ENCODE measurements at regions of chr4 and their contacts with region 1.

Region 1: DNA sequence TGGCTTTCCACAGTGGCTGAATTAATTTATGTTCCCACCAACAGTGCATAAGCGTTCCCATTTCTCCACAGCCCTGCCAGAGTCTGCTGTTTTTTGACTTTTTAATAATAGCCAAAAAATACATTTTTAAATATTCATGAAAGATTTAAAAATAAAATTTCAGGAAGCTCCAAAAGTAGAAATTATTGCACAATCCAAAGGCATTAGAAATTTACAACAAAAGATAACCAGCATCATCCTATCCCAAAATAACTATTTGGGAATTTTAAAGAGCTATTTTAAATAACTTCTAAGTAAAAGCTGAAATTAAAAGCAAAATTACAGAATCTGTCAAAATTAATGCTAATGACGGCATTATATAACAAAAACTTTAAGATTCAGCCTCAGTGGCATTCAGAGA is 131.5 kb downstream of the QDPR start:
- DNase-seq: no peak
- H3K4me3 ChIP-seq: no peak overlapping the region
- H3K27ac ChIP-seq: no peak overlapping the region
- H3K4me1 ChIP-seq: no peaks in the 10 kb centered on the region
- H3K27me3 ChIP-seq: no peaks in the 10 kb centered on the region
- CTCF ChIP-seq: no peak
- EP300 ChIP-seq: no peak
- POLR2A ChIP-seq: no peak
- RAD21 ChIP-seq: no peak

Region 2: GRCh38 chr4:17397611-17398010 is 17.3 kb after region 1 on chr4:
- CTCF ChIA-PET with region 1: interaction called, 12 read pairs
- POLR2A ChIA-PET with region 1: no interaction called
- DNase-seq: no peak
- H3K4me3 ChIP-seq: no peak overlapping the region
- H3K27ac ChIP-seq: no peak overlapping the region
- H3K4me1 ChIP-seq: no peaks in the 10 kb centered on the region
- H3K27me3 ChIP-seq: no peaks in the 10 kb centered on the region
- CTCF ChIP-seq: no peak
- EP300 ChIP-seq: no peak
- POLR2A ChIP-seq: no peak
- RAD21 ChIP-seq: no peak

Region 3: DNA sequence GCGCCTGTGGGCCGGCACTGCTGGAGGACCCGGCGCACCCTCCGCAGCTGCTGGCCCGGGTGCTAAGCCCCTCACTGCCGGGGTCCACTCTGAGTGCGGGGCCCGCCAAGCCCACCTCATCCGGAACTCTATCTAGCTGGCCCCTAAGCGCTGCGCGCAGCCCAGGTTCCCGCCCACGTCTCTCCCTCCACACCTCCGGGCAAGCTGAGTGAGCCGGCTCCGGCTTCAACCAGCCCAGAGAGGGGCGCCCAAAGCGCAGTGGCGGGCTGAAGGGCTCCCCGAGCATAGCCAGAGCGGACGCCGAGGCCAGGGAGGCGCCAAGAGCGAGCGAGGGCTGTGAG is 56.4 kb after region 1 on chr4:
- CTCF ChIA-PET with region 1: no interaction called
- POLR2A ChIA-PET with region 1: no interaction called
- DNase-seq: no peak
- H3K4me3 ChIP-seq: no peak overlapping the region
- H3K27ac ChIP-seq: no peak overlapping the region
- H3K4me1 ChIP-seq: no peaks in the 10 kb centered on the region
- H3K27me3 ChIP-seq: no peaks in the 10 kb centered on the region
- CTCF ChIP-seq: no peak
- EP300 ChIP-seq: no peak
- POLR2A ChIP-seq: no peak
- RAD21 ChIP-seq: no peak

Measured in H1 (cell line).